ENCODE measurements at regions of chr11 and their contacts with region 1.

Region 1: GRCh38 chr11:1050581-1051355 is 14.2 kb upstream of the MUC6 start:
- DNase-seq: peak; percentile 86
- H3K4me3 ChIP-seq: no peak overlapping the region
- H3K27ac ChIP-seq: peak overlapping the region in 1 of 4 donors; percentile 90
- H3K4me1 ChIP-seq: peaks cover 8 to 41% (median 22%) of the 10 kb centered on the region in 4 donors
- H3K27me3 ChIP-seq: peaks cover 57% of the 10 kb centered on the region
- CTCF ChIP-seq: peak; percentile 76 to 97 (median 92)
- EP300 ChIP-seq: no peak
- POLR2A ChIP-seq: no peak

Region 2: GRCh38 chr11:859509-860131 is 191.1 kb before region 1 on chr11:
- in situ Hi-C with region 1: loop called in 2 of 4 experiments (anchors 25 kb)
- intact Hi-C with region 1: loop called (anchors 10 kb)
- DNase-seq: peak; percentile 76
- H3K4me3 ChIP-seq: no peak overlapping the region
- H3K27ac ChIP-seq: peak overlapping the region in 3 of 4 donors; percentile 15 to 46 (median 42)
- H3K4me1 ChIP-seq: peaks cover 13 to 22% (median 15%) of the 10 kb centered on the region in 4 donors
- H3K27me3 ChIP-seq: peaks cover 36% of the 10 kb centered on the region
- CTCF ChIP-seq: no peak
- EP300 ChIP-seq: no peak
- POLR2A ChIP-seq: no peak

Region 3: DNA sequence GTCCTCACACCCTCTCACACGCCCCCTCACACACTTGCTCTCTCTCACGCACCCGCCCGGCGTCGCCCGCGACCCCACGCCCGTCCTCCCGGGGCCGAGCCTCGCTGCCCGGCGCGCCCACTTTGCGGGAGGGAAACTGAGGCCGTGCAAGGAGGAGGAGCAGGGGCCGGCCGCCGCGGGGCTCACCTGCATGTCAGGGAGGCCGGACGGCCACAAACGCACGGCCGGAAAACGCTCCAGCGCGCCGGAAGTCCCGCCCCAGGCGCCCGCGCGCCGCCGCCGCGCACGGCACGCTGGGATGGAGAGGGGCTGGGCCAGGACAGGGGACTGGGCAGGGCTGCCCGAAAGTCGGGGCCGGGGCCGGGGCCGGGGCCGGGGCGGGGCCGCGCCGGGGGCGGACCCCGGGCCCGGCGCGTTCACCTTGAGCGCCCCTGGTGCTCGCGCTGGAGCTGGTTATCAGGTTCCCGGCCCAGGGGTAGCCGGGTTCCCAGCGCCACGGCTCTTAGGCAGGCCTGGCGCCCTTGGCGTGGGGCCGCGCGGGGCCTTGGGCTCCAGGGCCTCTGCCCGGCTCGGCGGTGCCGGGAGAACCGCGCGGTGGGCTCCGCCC is 140.1 kb before region 1 on chr11 and contains the start of gene CHID1:
- in situ Hi-C with region 1: loop called in 1 of 4 experiments (anchors 25 kb)
- intact Hi-C with region 1: no loop called
- DNase-seq: peak; percentile 91
- H3K4me3 ChIP-seq: peak within 1 kb of the TSS; percentile 81 to 95 (median 87)
- H3K27ac ChIP-seq: peak within 1 kb of the TSS; percentile 90 to 98 (median 94)
- H3K4me1 ChIP-seq: peaks cover 12 to 17% (median 15%) of the 10 kb centered on the region in 4 donors
- H3K27me3 ChIP-seq: no peaks in the 10 kb centered on the region
- CTCF ChIP-seq: no peak
- EP300 ChIP-seq: no peak
- POLR2A ChIP-seq: peak; percentile 7
- total RNA-seq, gene CHID1: 15.3 to 58.2 (median 41.4) TPM

Region 4: GRCh38 chr11:1153951-1154493 is 103.3 kb after region 1 on chr11:
- in situ Hi-C with region 1: no loop called
- intact Hi-C with region 1: no loop called
- DNase-seq: peak; percentile 35
- H3K4me3 ChIP-seq: no peak overlapping the region
- H3K27ac ChIP-seq: no peak overlapping the region
- H3K4me1 ChIP-seq: no peaks in the 10 kb centered on the region
- H3K27me3 ChIP-seq: no peaks in the 10 kb centered on the region
- CTCF ChIP-seq: no peak
- EP300 ChIP-seq: no peak
- POLR2A ChIP-seq: no peak

Measured in transverse colon (tissue), 4 donors.